ENCODE measurements at regions of chr6 and their contacts with region 1.

Region 1: GRCh38 chr6:108558372-108559096 is 2.2 kb upstream of the FOXO3 start:
- DNase-seq: peak; percentile 94
- ATAC-seq: peak; percentile 51
- H3K4me3 ChIP-seq: peak overlapping the region; percentile 90 to 99 (median 96)
- H3K27ac ChIP-seq: peak overlapping the region; percentile 96
- H3K4me1 ChIP-seq: peaks cover 48% of the 10 kb centered on the region
- H3K27me3 ChIP-seq: no peaks in the 10 kb centered on the region; a peak in 2 of 5 replicates
- CTCF ChIP-seq: no peak
- EP300 ChIP-seq: peak; percentile 27 to 68; a peak in 2 of 4 replicates
- POLR2A ChIP-seq: no peak; a peak in 1 of 4 replicates
- RAD21 ChIP-seq: no peak

Region 2: DNA sequence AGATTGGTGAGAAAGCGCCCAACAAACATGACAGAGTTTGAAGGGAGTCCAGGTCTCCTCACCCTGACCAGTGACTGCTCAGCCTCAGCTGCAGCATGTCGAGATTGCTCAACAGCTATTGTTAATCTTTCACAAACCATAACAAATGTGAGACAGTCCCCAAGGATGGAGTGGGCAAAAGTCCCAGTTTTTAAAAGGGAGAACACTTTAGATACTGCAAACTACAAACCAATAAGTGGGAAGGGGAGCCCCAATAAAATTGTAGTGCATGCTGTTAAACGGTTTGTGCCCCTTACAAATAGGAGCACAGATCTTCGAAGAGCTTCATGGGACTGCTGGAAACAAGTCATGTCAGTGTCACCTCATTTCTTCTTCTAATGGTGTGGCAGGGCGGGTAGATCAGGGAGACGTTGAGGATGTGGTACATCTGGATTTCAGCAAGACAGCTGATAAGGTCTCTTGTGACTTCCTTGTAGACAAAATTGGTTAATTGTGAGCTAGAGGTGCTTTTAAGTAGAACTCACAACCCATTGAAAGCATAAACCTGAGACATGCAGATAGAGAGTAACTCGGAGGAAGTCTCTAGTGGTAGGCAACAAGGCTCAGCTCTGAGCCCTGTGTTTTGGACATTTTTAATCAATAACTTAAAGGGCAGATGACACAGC is 155.7 kb after region 1 on chr6:
- CTCF ChIA-PET with region 1: no interaction called
- POLR2A ChIA-PET with region 1: interaction called, 5 read pairs
- in situ Hi-C with region 1: no loop called
- intact Hi-C with region 1: loop called (anchors 10 kb)
- DNase-seq: no peak
- ATAC-seq: peak; percentile 67
- H3K4me3 ChIP-seq: peak overlapping the region in 1 of 3 experiments; percentile 29; a peak in 2 of 6 replicates
- H3K27ac ChIP-seq: no peak overlapping the region
- H3K4me1 ChIP-seq: peaks cover 82% of the 10 kb centered on the region
- H3K27me3 ChIP-seq: peaks cover 0 to under 1% of the 10 kb centered on the region in 2 experiments; a peak in 1 of 5 replicates
- CTCF ChIP-seq: no peak
- EP300 ChIP-seq: no peak
- POLR2A ChIP-seq: no peak
- RAD21 ChIP-seq: no peak

Region 3: GRCh38 chr6:108782179-108783041 is 223.9 kb after region 1 on chr6:
- CTCF ChIA-PET with region 1: no interaction called
- POLR2A ChIA-PET with region 1: interaction called, 9 read pairs
- in situ Hi-C with region 1: loop called (anchors 5 kb)
- intact Hi-C with region 1: loop called (anchors 2 kb)
- DNase-seq: peak; percentile 40
- ATAC-seq: peak; percentile 91
- H3K4me3 ChIP-seq: peak overlapping the region; percentile 49 to 85 (median 73)
- H3K27ac ChIP-seq: no peak overlapping the region
- H3K4me1 ChIP-seq: peaks cover 63% of the 10 kb centered on the region
- H3K27me3 ChIP-seq: no peaks in the 10 kb centered on the region
- CTCF ChIP-seq: peak; percentile 96
- EP300 ChIP-seq: no peak
- POLR2A ChIP-seq: no peak
- RAD21 ChIP-seq: peak; percentile 86

Region 4: GRCh38 chr6:108848116-108848868 is 289.8 kb after region 1 on chr6 and contains the start of gene ARMC2:
- CTCF ChIA-PET with region 1: no interaction called
- POLR2A ChIA-PET with region 1: interaction called, 16 read pairs
- in situ Hi-C with region 1: no loop called
- intact Hi-C with region 1: no loop called
- DNase-seq: peak; percentile 74
- ATAC-seq: peak; percentile 97
- H3K4me3 ChIP-seq: peak within 1 kb of the TSS; percentile 63 to 84 (median 66)
- H3K27ac ChIP-seq: peak within 1 kb of the TSS; percentile 48
- H3K4me1 ChIP-seq: peaks cover 34% of the 10 kb centered on the region
- H3K27me3 ChIP-seq: peaks cover 0 to 4% of the 10 kb centered on the region in 2 experiments; a peak in 3 of 5 replicates
- CTCF ChIP-seq: no peak
- EP300 ChIP-seq: no peak
- POLR2A ChIP-seq: peak in 1 of 2 experiments; percentile 95; a peak in 2 of 4 replicates
- RAD21 ChIP-seq: no peak
- total RNA-seq, gene ARMC2: 3.2 and 4.4 TPM in 2 replicates

Region 5: DNA sequence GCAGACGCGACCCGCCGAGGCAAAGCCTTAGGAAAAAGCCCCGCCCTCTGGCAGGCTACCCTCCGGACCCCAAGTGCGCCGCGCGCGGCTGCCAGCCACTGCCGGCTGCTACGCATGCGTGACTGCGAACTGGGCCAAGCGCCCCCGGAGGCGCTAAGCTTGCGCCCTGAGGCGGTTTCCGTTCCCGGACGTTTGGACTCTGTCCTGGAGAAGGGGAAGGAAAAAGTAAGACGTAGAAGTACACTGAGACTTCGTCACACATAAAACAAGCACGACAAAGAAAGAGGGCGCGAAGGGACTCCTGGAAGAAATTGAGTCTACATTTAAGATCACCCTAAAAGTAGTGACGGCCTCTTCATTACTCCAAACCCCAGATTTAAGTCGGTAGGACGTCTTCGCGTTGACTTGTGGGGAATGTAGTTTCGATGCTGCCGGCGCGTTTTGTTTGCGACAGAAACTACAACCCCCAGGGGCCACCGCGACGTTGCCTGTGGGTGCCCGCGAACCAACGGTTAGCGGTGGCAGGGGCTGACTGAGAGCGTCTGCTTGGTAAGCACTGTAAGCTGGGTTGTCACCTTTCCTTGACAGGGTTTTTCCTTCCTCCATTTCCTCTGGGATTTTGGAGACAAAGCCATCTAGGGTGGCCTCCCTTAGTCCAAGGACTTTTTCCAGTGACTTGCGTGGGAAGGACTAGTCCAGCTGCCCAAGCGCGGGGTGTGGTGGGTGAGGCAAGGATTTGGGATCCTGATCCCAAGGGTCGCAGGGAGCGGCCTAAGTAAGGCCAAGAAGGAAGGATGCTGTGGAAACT is 536.7 kb after region 1 on chr6 and contains the start of gene CEP57L1:
- CTCF ChIA-PET with region 1: no interaction called
- POLR2A ChIA-PET with region 1: interaction called, 13 read pairs
- in situ Hi-C with region 1: no loop called
- intact Hi-C with region 1: no loop called
- DNase-seq: peak; percentile 93
- ATAC-seq: peak; percentile 81
- H3K4me3 ChIP-seq: peak within 1 kb of the TSS; percentile 74 to 98 (median 89)
- H3K27ac ChIP-seq: peak within 1 kb of the TSS; percentile 96
- H3K4me1 ChIP-seq: peaks cover 45% of the 10 kb centered on the region
- H3K27me3 ChIP-seq: no peaks in the 10 kb centered on the region; a peak in 1 of 5 replicates
- CTCF ChIP-seq: no peak
- EP300 ChIP-seq: no peak
- POLR2A ChIP-seq: peak; percentile 52 to 87; a peak in 3 of 4 replicates
- RAD21 ChIP-seq: no peak
- total RNA-seq, gene CEP57L1: 15.5 and 20.7 TPM in 2 replicates